ENCODE measurements at regions of chr16 and their contacts with region 1.

Region 1: GRCh38 chr16:3645504-3646347 is 8.8 kb upstream of the DNASE1 start:
- DNase-seq: no peak
- H3K4me3 ChIP-seq: no peak overlapping the region
- H3K4me3 Mint-ChIP-seq: no peak overlapping the region
- H3K27ac ChIP-seq: no peak overlapping the region
- H3K27ac Mint-ChIP-seq: no peak overlapping the region
- H3K4me1 ChIP-seq: no peaks in the 10 kb centered on the region
- H3K4me1 Mint-ChIP-seq: no peaks in the 10 kb centered on the region
- H3K27me3 ChIP-seq: no peaks in the 10 kb centered on the region
- H3K27me3 Mint-ChIP-seq: no peaks in the 10 kb centered on the region
- CTCF ChIP-seq: no peak

Region 2: GRCh38 chr16:3580689-3581088 is 65.0 kb before region 1 on chr16:
- intact Hi-C with region 1: loop called in 1 of 2 experiments (anchors 10 kb)
- DNase-seq: no peak
- H3K4me3 ChIP-seq: no peak overlapping the region
- H3K4me3 Mint-ChIP-seq: peak overlapping the region in 1 of 2 donors; percentile 81
- H3K27ac ChIP-seq: no peak overlapping the region
- H3K27ac Mint-ChIP-seq: peak overlapping the region in 1 of 7 donors; percentile 50
- H3K4me1 ChIP-seq: peaks cover 41 to 45% of the 10 kb centered on the region in 2 donors
- H3K4me1 Mint-ChIP-seq: peaks cover 47% of the 10 kb centered on the region
- H3K27me3 ChIP-seq: peaks cover 0 to 30% of the 10 kb centered on the region in 2 donors
- H3K27me3 Mint-ChIP-seq: peaks cover 37 to 64% (median 44%) of the 10 kb centered on the region in 3 donors
- CTCF ChIP-seq: no peak

Region 3: GRCh38 chr16:3596101-3596861 is 49.4 kb before region 1 on chr16:
- intact Hi-C with region 1: no loop called
- DNase-seq: no peak
- H3K4me3 ChIP-seq: no peak overlapping the region
- H3K4me3 Mint-ChIP-seq: no peak overlapping the region
- H3K27ac ChIP-seq: no peak overlapping the region
- H3K27ac Mint-ChIP-seq: no peak overlapping the region
- H3K4me1 ChIP-seq: peaks cover 3 to 5% of the 10 kb centered on the region in 2 donors
- H3K4me1 Mint-ChIP-seq: peaks cover 8% of the 10 kb centered on the region
- H3K27me3 ChIP-seq: peaks cover 0 to 11% of the 10 kb centered on the region in 2 donors
- H3K27me3 Mint-ChIP-seq: peaks cover 16 to 26% (median 25%) of the 10 kb centered on the region in 3 donors
- CTCF ChIP-seq: no peak

Region 4: GRCh38 chr16:3696425-3697218 is 50.9 kb after region 1 on chr16:
- intact Hi-C with region 1: no loop called
- DNase-seq: no peak
- H3K4me3 ChIP-seq: no peak overlapping the region
- H3K4me3 Mint-ChIP-seq: no peak overlapping the region
- H3K27ac ChIP-seq: no peak overlapping the region
- H3K27ac Mint-ChIP-seq: no peak overlapping the region
- H3K4me1 ChIP-seq: peaks cover 0 to 7% of the 10 kb centered on the region in 2 donors
- H3K4me1 Mint-ChIP-seq: peaks cover 7% of the 10 kb centered on the region
- H3K27me3 ChIP-seq: no peaks in the 10 kb centered on the region
- H3K27me3 Mint-ChIP-seq: peaks cover 0 to 14% (median 3%) of the 10 kb centered on the region in 3 donors
- CTCF ChIP-seq: no peak

Measured in CD14-positive monocyte (primary cell).